HAP-1 (cell line): ENCODE measurements at regions of chr1 and their contacts with region 1.

Region 1: DNA sequence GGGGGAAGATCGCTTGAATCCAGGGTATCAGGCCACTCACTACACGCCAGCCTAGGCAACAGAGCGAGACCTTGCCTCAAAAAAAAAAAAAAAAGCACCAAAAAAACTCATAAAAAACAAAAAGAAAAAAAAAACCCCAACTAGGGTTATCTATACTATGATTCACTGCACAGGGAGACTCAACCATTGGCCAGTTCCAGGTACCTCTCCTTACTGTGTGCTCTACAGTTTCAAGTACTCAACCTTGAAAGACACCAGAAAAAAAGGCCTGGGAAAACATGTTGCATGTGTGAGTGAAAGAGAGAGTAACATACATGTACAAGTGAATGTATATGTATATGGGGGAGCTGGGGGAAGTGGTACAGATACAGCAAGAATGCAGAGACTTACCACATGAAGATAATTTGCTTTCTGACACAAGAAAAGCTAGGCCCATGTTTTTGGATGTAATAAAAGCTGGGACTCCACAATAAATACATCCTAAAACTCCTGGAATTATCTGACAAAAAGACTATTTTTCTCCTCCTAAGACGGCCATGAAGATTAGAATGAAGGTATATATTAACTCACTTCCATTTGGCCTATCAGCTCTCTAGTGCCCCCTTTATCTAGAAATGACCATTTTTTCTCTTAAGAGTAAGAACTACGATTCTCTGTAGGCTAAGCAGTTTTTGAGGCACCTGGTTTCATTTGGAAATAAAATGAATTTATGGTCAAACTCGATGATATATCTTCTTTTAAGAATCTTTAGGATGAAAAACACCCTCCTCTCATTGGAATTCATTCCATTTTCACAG is 52.2 kb downstream of the SLC27A3 start:
- DNase-seq: no peak
- H3K4me3 ChIP-seq: no peak overlapping the region
- H3K4me1 ChIP-seq: no peaks in the 10 kb centered on the region
- H3K27me3 ChIP-seq: no peaks in the 10 kb centered on the region

Region 2: GRCh38 chr1:153946622-153947241 is 119.4 kb after region 1 on chr1 and contains the start of gene DENND4B:
- in situ Hi-C with region 1: loop called (anchors 10 kb)
- DNase-seq: peak; percentile 81 to 87
- H3K4me3 ChIP-seq: peak within 1 kb of the TSS; percentile 65
- H3K4me1 ChIP-seq: peaks cover 11% of the 10 kb centered on the region
- H3K27me3 ChIP-seq: no peaks in the 10 kb centered on the region